Motor neuron (in vitro differentiated cells): ENCODE measurements at regions of chr1 and their contacts with region 1.

Region 1: GRCh38 chr1:30111431-30111830 is 612.0 kb downstream of the MATN1 start:
- ATAC-seq: peak; percentile 90 to 100 (median 98)
- H3K4me3 ChIP-seq: peak overlapping the region in 1 of 5 donors; percentile 9
- H3K27ac ChIP-seq: no peak overlapping the region
- H3K4me1 ChIP-seq: peaks cover 0 to 2% of the 10 kb centered on the region in 2 donors

Region 2: GRCh38 chr1:29245876-29246275 is 865.6 kb before region 1 on chr1:
- in situ Hi-C with region 1: loop called in 5 of 9 experiments (anchors 10 to 25 kb)
- ATAC-seq: peak; percentile 20 to 92 (median 60)
- H3K4me3 ChIP-seq: no peak overlapping the region
- H3K27ac ChIP-seq: no peak overlapping the region
- H3K4me1 ChIP-seq: peaks cover 8 to 18% of the 10 kb centered on the region in 2 donors

Region 3: GRCh38 chr1:29356663-29357062 is 754.8 kb before region 1 on chr1:
- in situ Hi-C with region 1: loop called in 1 of 9 experiments (anchors 25 kb)
- ATAC-seq: peak in 1 of 8 experiments; percentile 33
- H3K4me3 ChIP-seq: no peak overlapping the region
- H3K27ac ChIP-seq: no peak overlapping the region
- H3K4me1 ChIP-seq: peaks cover 3 to 6% of the 10 kb centered on the region in 2 donors

Region 4: GRCh38 chr1:29939079-29939478 is 172.4 kb before region 1 on chr1:
- in situ Hi-C with region 1: no loop called
- ATAC-seq: peak in 5 of 8 experiments; percentile 73 to 93 (median 82)
- H3K4me3 ChIP-seq: no peak overlapping the region
- H3K27ac ChIP-seq: no peak overlapping the region
- H3K4me1 ChIP-seq: peaks cover 7 to 12% of the 10 kb centered on the region in 2 donors

Region 5: GRCh38 chr1:30684881-30685795 is 573.7 kb after region 1 on chr1:
- in situ Hi-C with region 1: loop called in 2 of 9 experiments (anchors 25 kb)
- ATAC-seq: peak in 5 of 8 experiments; percentile 90 to 94 (median 93)
- H3K4me3 ChIP-seq: peak overlapping the region in 4 of 5 donors; percentile 6 to 23 (median 18)
- H3K27ac ChIP-seq: peak overlapping the region in 1 of 2 donors; percentile 28
- H3K4me1 ChIP-seq: peaks cover 8 to 26% of the 10 kb centered on the region in 2 donors